A673 (cell line): ENCODE measurements at regions of chr14 and their contacts with region 1.

Region 1: DNA sequence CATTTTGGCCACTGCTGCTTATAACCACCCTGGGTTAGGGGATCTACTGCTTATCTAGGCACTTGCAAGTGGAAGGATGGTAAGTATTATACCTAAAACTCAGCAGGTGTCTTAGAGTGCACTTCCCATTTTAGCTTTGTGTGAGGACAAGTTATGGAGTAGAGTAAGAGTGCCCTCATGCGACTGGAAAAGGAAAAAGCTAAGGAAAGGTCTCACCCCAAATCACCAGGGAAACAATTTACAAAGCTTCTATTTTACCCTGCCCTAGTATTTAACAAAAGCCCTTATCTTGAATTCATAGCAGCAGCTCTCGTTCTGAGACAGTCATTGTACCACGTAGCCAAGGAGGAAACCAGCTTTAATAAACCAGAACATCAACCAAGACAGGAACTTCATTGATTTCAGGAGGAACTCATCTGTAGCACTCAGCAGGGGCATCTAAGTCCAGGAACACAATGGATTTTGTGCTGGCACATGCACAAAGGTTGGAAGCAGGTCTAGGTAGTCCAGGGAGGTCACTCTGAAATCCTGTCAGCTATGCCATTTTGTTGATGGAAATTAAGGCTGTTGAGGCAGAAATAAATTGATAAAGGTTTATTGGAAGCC is 2.9 kb downstream of the RDH12 start:
- DNase-seq: peak; percentile 76
- H3K4me3 ChIP-seq: no peak overlapping the region
- H3K27ac ChIP-seq: no peak overlapping the region
- H3K4me1 ChIP-seq: no peaks in the 10 kb centered on the region
- H3K27me3 ChIP-seq: no peaks in the 10 kb centered on the region
- CTCF ChIP-seq: peak; percentile 81

Region 2: GRCh38 chr14:67426983-67427606 is 277.5 kb before region 1 on chr14:
- CTCF ChIA-PET with region 1: interaction called, 18 read pairs
- POLR2A ChIA-PET with region 1: no interaction called
- intact Hi-C with region 1: loop called (anchors 2 kb)
- DNase-seq: peak; percentile 87
- H3K4me3 ChIP-seq: no peak overlapping the region
- H3K27ac ChIP-seq: no peak overlapping the region
- H3K4me1 ChIP-seq: no peaks in the 10 kb centered on the region
- H3K27me3 ChIP-seq: no peaks in the 10 kb centered on the region
- CTCF ChIP-seq: peak; percentile 81

Region 3: DNA sequence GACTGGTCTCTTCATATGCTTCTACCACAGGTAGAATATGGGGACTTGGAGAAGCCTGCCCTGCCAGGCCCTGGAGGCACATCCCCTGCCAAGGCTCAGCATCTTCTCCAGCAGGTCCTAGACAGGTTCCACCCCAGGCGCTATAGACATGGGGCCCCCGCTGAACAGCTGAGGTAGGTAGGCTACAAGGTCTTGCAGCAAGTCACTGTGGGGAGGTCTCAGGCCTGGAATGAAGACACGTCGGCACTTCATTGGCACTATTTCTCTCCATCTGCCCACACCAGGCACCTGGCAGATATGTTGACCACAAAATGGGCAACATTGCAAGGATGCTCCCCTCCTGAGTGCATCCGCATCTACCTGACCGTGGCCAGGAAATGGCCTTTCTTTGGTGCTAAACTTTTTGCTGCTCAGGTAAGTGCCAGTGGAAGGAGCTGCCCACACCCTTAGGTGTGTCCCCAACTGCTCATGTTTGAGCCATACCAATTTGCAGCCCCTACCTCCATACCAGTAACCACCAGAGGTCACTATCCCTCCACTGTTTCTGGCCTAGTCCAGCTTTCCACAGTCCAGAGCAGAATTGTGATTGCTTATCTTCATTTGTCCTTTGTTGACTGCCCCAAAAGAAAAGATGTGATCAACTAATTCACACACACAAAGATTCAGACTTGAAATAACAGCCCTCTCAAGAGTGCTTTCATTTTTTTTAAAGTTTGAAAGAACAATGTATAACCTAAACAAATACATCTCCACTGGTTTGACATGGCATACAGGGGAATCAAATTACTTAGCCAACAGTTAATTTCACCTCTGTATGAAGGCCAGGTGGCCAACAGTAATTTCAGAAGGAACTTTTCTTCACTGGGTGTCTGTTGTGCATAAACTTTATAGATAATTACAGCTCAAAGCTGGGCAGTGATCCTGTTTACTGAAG is 120.6 kb before region 1 on chr14:
- CTCF ChIA-PET with region 1: interaction called, 23 read pairs
- POLR2A ChIA-PET with region 1: no interaction called
- intact Hi-C with region 1: loop called (anchors 1 kb)
- DNase-seq: peak; percentile 41
- H3K4me3 ChIP-seq: no peak overlapping the region
- H3K27ac ChIP-seq: no peak overlapping the region
- H3K4me1 ChIP-seq: no peaks in the 10 kb centered on the region
- H3K27me3 ChIP-seq: no peaks in the 10 kb centered on the region
- CTCF ChIP-seq: peak; percentile 68

Region 4: GRCh38 chr14:67599698-67600561 is 104.7 kb before region 1 on chr14 and contains the start of gene PIGH:
- CTCF ChIA-PET with region 1: interaction called, 11 read pairs
- POLR2A ChIA-PET with region 1: no interaction called
- intact Hi-C with region 1: no loop called
- DNase-seq: peak; percentile 94
- H3K4me3 ChIP-seq: peak within 1 kb of the TSS; percentile 73
- H3K27ac ChIP-seq: peak within 1 kb of the TSS; percentile 56
- H3K4me1 ChIP-seq: no peaks in the 10 kb centered on the region
- H3K27me3 ChIP-seq: no peaks in the 10 kb centered on the region
- CTCF ChIP-seq: peak; percentile 65
- total RNA-seq, gene PIGH: 25.7 TPM in 2 replicates

Region 5: GRCh38 chr14:67619446-67620216 is 85.0 kb before region 1 on chr14 and contains the start of gene ARG2:
- CTCF ChIA-PET with region 1: interaction called, 27 read pairs
- POLR2A ChIA-PET with region 1: no interaction called
- intact Hi-C with region 1: loop called (anchors 1 kb)
- DNase-seq: peak; percentile 95
- H3K4me3 ChIP-seq: peak within 1 kb of the TSS; percentile 69
- H3K27ac ChIP-seq: peak within 1 kb of the TSS; percentile 30
- H3K4me1 ChIP-seq: peaks cover 31% of the 10 kb centered on the region
- H3K27me3 ChIP-seq: no peaks in the 10 kb centered on the region
- CTCF ChIP-seq: no peak; the same call in 1 of the 2 replicates
- total RNA-seq, gene ARG2: 32.1 and 35.6 TPM in 2 replicates

Region 6: DNA sequence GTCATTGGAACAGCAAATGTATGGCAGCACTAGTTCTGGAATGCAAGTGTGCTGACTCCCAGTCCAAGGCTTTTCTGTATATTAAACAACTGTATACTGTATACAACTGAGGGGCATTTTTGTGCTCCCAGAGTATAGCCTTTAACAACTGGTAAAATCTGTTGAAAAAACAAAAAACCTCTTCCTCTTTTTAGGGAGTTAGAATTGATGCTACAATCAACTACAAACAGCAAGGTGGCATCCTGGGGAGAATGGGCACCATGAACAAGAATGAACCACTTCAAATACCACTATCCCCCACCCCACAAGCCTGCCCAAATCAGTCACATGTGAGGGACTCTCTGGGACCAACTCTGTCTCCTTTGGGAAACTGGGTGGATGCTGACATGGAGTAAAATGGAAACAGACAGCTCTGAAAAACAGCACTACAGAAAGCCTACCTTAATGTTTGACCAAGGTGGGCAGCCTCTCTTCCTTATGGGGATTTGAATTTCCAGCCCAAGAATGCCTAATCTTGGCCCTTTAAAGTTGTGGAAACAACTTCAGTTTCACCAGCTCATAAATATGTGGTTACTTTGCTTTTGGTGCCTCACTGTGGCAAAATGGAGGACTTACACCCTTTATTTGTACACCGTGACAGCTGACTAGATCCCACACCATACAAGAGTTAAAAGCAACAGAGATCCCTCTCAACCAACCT is 37.7 kb before region 1 on chr14:
- CTCF ChIA-PET with region 1: interaction called, 12 read pairs
- POLR2A ChIA-PET with region 1: no interaction called
- intact Hi-C with region 1: no loop called
- DNase-seq: peak; percentile 74
- H3K4me3 ChIP-seq: no peak overlapping the region
- H3K27ac ChIP-seq: no peak overlapping the region
- H3K4me1 ChIP-seq: no peaks in the 10 kb centered on the region
- H3K27me3 ChIP-seq: no peaks in the 10 kb centered on the region
- CTCF ChIP-seq: peak; percentile 73